Activated CD4-positive, alpha-beta T cell treated with anti-CD3 and anti-CD28 coated beads for 36 hours (primary cell): ENCODE measurements at regions of chr17 and their contacts with region 1.

Region 1: GRCh38 chr17:81222906-81223761 is at the start of gene CEP131:
- DNase-seq: peak; percentile 100
- ATAC-seq: peak; percentile 98
- H3K4me3 Mint-ChIP-seq: peak within 1 kb of the TSS; percentile 50
- H3K27ac Mint-ChIP-seq: peak within 1 kb of the TSS; percentile 76
- H3K4me1 Mint-ChIP-seq: peaks cover 19% of the 10 kb centered on the region
- H3K27me3 Mint-ChIP-seq: no peaks in the 10 kb centered on the region
- total RNA-seq, gene CEP131: 7.6 to 9.5 TPM

Region 2: GRCh38 chr17:80544655-80545498 is 678.3 kb before region 1 on chr17 and contains the start of gene RPTOR:
- CTCF ChIA-PET with region 1: no interaction called
- POLR2A ChIA-PET with region 1: no interaction called
- intact Hi-C with region 1: loop called in 1 of 2 experiments (anchors 10 kb)
- DNase-seq: peak; percentile 95
- ATAC-seq: peak; percentile 98
- H3K4me3 Mint-ChIP-seq: peak within 1 kb of the TSS; percentile 89
- H3K27ac Mint-ChIP-seq: peak within 1 kb of the TSS; percentile 91
- H3K4me1 Mint-ChIP-seq: peaks cover 32% of the 10 kb centered on the region
- H3K27me3 Mint-ChIP-seq: peaks cover 9% of the 10 kb centered on the region
- total RNA-seq, gene RPTOR: 48.6 to 58.1 TPM

Region 3: DNA sequence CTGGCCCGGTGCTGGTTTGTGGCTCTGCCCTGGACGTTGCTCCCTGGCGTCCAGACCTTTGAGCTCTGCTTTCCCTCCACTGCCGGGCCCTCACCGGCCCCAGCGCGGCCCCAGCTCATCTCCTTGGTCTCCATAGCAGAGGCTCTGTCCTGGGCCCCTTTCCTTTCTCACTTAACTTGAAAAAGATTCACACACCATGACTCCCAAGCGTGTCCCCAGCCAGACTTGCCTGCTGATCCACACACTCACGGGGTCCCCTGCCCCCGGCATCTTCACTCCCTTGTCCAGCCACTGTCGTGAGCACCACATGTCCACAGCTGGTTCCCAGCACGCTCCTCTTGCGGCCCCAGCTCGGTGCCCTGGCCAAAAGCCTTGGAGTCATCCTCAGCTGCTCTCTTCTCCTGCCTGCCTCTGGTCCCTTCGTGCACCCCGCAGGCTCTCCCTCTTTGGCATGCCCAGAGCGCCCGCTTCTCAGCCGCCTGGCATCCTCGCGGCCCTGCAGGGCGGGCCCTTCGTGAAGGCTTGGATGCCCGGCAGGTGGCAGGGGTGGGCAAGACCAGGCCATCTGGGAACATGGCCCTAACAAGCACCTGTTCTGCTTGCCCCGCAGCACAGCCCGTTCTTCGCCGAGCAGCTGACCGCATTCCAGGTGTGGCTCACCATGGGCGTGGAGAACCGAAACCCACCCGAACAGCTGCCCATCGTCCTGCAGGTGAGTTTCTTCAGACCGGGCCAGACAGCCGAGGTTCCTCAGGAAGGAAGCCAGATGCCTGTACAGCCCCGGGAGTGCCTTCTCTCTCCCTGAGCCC is 377.1 kb before region 1 on chr17:
- CTCF ChIA-PET with region 1: no interaction called
- POLR2A ChIA-PET with region 1: no interaction called
- intact Hi-C with region 1: no loop called
- DNase-seq: no peak
- ATAC-seq: no peak
- H3K4me3 Mint-ChIP-seq: no peak overlapping the region
- H3K27ac Mint-ChIP-seq: peak overlapping the region; percentile 93
- H3K4me1 Mint-ChIP-seq: peaks cover 49% of the 10 kb centered on the region
- H3K27me3 Mint-ChIP-seq: no peaks in the 10 kb centered on the region

Region 4: GRCh38 chr17:81094509-81095382 is 128.4 kb before region 1 on chr17:
- CTCF ChIA-PET with region 1: no interaction called
- POLR2A ChIA-PET with region 1: interaction called, 3 read pairs
- intact Hi-C with region 1: loop called in 1 of 2 experiments (anchors 1 kb)
- DNase-seq: peak; percentile 95
- ATAC-seq: peak; percentile 95
- H3K4me3 Mint-ChIP-seq: peak overlapping the region; percentile 26
- H3K27ac Mint-ChIP-seq: peak overlapping the region; percentile 60
- H3K4me1 Mint-ChIP-seq: peaks cover 43% of the 10 kb centered on the region
- H3K27me3 Mint-ChIP-seq: no peaks in the 10 kb centered on the region

Region 5: GRCh38 chr17:81165246-81166032 is 57.7 kb before region 1 on chr17 and contains the start of gene PVALEF:
- CTCF ChIA-PET with region 1: no interaction called
- POLR2A ChIA-PET with region 1: no interaction called
- intact Hi-C with region 1: no loop called
- DNase-seq: no peak
- ATAC-seq: no peak
- H3K4me3 Mint-ChIP-seq: no peak within 1 kb of the TSS
- H3K27ac Mint-ChIP-seq: no peak within 1 kb of the TSS
- H3K4me1 Mint-ChIP-seq: no peaks in the 10 kb centered on the region
- H3K27me3 Mint-ChIP-seq: peaks cover 16% of the 10 kb centered on the region
- total RNA-seq, gene PVALEF: not detected

Region 6: GRCh38 chr17:81285179-81285878 is 62.2 kb after region 1 on chr17:
- CTCF ChIA-PET with region 1: no interaction called
- POLR2A ChIA-PET with region 1: no interaction called
- intact Hi-C with region 1: loop called in 1 of 2 experiments (anchors 2 kb)
- DNase-seq: peak; percentile 78
- ATAC-seq: peak; percentile 91
- H3K4me3 Mint-ChIP-seq: peak overlapping the region; percentile 79
- H3K27ac Mint-ChIP-seq: peak overlapping the region; percentile 95
- H3K4me1 Mint-ChIP-seq: peaks cover 34% of the 10 kb centered on the region
- H3K27me3 Mint-ChIP-seq: no peaks in the 10 kb centered on the region

Region 7: GRCh38 chr17:81484195-81484979 is 261.3 kb after region 1 on chr17:
- CTCF ChIA-PET with region 1: no interaction called
- POLR2A ChIA-PET with region 1: no interaction called
- intact Hi-C with region 1: loop called in 1 of 2 experiments (anchors 1 kb)
- DNase-seq: peak; percentile 94
- ATAC-seq: peak; percentile 68
- H3K4me3 Mint-ChIP-seq: peak overlapping the region; percentile 30
- H3K27ac Mint-ChIP-seq: no peak overlapping the region
- H3K4me1 Mint-ChIP-seq: peaks cover 16% of the 10 kb centered on the region
- H3K27me3 Mint-ChIP-seq: peaks cover 26% of the 10 kb centered on the region

Region 8: DNA sequence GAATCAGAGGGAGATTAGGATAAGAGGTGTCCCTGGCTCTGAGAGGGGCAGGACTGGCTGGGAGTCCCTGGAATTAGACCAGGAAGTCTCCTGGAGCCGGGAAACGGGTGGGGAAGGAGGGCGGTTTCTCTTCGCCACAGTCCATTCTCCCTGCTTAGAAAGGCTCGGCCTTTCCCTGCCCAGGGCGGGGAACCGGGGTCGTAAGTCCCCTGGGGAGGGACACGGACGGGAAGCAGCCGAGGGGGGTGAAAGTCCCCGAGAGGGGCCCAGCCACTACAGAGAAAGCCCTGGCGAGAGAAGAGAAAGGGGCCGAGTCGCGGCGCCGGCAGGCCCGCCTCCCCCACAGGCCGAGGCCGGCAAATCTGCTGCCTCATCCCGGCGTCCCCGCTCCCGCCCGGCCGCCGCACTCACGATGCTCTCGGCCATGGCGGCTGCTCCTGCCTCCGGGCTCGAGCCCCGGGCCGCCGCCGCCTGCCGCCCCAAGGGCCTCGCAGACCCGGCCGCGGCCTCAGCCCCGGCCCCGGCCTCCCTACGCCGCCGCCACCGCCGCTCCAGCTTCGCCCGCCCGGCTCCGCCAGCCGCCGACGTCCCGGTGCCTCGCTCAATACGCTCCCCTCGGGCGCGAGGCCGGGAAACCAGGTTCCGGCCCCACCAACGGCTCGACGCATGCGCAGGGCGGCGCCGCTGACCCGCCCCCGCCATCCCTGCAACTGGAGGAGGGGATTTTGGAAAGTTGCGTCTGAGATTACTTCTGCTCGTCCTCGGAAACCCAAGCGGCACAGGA is 413.6 kb after region 1 on chr17 and contains the starts of genes NPLOC4 and TSPAN10:
- CTCF ChIA-PET with region 1: no interaction called
- POLR2A ChIA-PET with region 1: no interaction called
- intact Hi-C with region 1: loop called in 1 of 2 experiments (anchors 1 kb)
- DNase-seq: peak; percentile 91
- ATAC-seq: peak; percentile 89
- H3K4me3 Mint-ChIP-seq: peak within 1 kb of the TSS; percentile 96
- H3K27ac Mint-ChIP-seq: peak within 1 kb of the TSS; percentile 84
- H3K4me1 Mint-ChIP-seq: peaks cover 23% of the 10 kb centered on the region
- H3K27me3 Mint-ChIP-seq: no peaks in the 10 kb centered on the region
- total RNA-seq, gene NPLOC4: 71.8 to 93.1 TPM
- total RNA-seq, gene TSPAN10: 0.34 to 0.35 TPM